ENCODE measurements at regions of chr4 and their contacts with region 1.

Region 1: GRCh38 chr4:1856042-1856788 is at the start of gene LETM1:
- DNase-seq: peak; percentile 93
- H3K4me3 Mint-ChIP-seq: peak within 1 kb of the TSS; percentile 83
- H3K27ac Mint-ChIP-seq: peak within 1 kb of the TSS; percentile 79
- H3K4me1 Mint-ChIP-seq: peaks cover 26% of the 10 kb centered on the region
- H3K27me3 Mint-ChIP-seq: no peaks in the 10 kb centered on the region
- CTCF ChIP-seq: peak; percentile 8
- total RNA-seq, gene LETM1: 85.0 and 86.3 TPM in 2 replicates

Region 2: DNA sequence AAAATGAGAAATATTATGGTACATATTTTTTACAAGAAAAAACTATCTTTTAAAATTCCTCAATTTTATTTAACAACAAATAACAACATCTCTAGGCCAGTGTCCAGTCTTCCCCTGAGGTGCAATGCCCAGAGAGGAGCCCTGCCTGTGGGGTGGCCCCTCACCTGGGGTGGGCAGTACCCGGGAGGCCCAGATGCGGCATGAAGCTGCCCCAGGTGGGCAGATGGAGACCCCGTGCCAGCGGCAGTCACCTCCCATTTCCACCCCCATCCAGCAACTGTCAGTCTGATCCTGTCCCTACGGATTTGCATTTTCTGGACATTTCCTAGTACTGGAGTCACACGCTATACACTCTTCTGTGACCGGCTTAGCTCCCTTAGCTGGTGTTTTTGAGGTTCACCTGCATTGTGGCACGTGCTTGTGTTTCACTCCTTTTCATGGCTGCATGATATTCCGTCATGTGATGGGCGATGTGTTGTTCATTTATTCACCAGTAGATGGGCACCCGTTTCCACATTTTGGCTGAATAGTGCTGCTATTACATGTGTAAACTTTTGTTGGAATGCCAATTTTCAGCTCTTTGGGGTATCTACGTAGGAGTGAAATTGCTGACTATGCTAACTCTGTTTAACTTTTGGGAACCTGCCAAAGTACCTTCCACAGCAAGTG is 578.4 kb before region 1 on chr4:
- CTCF ChIA-PET with region 1: no interaction called
- POLR2A ChIA-PET with region 1: no interaction called
- intact Hi-C with region 1: no loop called
- DNase-seq: peak; percentile 24
- H3K4me3 Mint-ChIP-seq: no peak overlapping the region
- H3K27ac Mint-ChIP-seq: no peak overlapping the region
- H3K4me1 Mint-ChIP-seq: peaks cover 9% of the 10 kb centered on the region
- H3K27me3 Mint-ChIP-seq: peaks cover 10% of the 10 kb centered on the region
- CTCF ChIP-seq: no peak

Region 3: DNA sequence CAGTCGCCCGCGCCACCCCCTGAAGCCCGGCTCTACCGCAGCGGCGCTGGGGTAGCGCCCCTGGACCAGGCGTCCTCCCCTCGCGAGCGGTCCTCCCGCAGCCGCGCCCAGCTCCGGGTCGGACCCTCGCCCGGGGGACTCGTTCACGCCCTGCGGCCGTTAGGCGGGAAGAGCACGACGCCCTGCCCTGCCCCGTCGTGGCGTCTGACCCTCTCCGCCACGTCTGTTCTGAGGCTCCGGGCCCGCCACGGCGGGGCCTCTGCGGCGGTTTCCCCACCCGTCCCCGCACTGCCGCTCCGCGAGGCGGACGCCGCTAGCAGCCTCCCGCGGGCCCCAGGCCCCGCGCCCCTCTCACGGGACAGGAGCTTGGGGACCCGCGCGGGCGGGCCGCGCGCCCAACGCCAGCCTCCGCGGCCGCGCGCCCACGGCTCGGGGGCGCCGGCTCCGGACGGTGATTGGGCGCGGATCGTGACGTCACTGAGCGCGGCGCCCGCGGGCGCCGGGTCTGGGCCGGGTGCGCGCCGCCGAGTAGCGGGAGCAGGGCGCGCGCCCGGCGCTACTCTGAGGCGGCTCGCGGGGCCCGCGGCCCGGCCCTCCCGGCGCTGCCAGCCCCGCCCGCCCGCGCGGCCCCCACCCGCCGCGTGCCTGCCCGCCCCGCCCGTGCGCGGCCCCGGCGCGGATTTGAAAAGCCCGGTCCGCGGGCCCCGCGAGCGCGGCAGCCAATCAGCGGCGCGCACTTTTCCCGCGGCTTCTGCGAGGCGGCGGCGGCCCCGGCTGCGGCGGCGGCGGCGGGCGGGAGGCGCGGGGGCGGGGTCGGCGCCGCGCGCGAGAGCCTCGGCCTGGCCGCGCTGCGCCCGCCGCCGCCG is 14.6 kb after region 1 on chr4 and contains the start of gene NSD2:
- CTCF ChIA-PET with region 1: no interaction called
- POLR2A ChIA-PET with region 1: interaction called, 45 read pairs
- intact Hi-C with region 1: no loop called
- DNase-seq: peak; percentile 82
- H3K4me3 Mint-ChIP-seq: peak within 1 kb of the TSS; percentile 88
- H3K27ac Mint-ChIP-seq: peak within 1 kb of the TSS; percentile 82
- H3K4me1 Mint-ChIP-seq: peaks cover 21% of the 10 kb centered on the region
- H3K27me3 Mint-ChIP-seq: no peaks in the 10 kb centered on the region
- CTCF ChIP-seq: no peak
- total RNA-seq, gene NSD2: 100 and 109 TPM in 2 replicates

Measured in MCF 10A (cell line).